Endothelial cell of umbilical vein (primary cell): ENCODE measurements at regions of chr6 and their contacts with region 1.

Region 1: DNA sequence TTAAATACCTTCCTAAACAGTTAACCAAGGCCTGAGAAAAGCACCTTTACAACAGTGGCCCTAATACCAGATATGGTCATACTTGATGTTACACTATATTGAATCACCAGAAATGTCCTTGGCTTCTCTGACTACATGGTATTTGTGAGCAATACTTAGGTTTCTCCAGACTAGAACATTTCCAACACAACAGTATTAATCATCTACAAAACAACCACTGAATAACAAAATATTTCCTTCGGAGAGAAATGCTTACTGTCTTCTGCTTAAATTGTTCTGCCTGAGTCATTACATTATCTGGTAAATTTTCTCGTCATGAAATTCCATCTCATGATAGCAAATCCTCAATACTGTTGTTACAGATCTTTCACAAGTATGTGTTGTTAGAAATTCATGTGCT is 252.9 kb upstream of the RUNX2 start:
- DNase-seq: peak; percentile 73
- H3K4me3 ChIP-seq: no peak overlapping the region
- H3K27ac ChIP-seq: peak overlapping the region; percentile 60
- H3K4me1 ChIP-seq: peaks cover 23% of the 10 kb centered on the region
- H3K27me3 ChIP-seq: no peaks in the 10 kb centered on the region
- CTCF ChIP-seq: no peak
- POLR2A ChIP-seq: no peak

Region 2: GRCh38 chr6:45086360-45087084 is 11.3 kb after region 1 on chr6:
- CTCF ChIA-PET with region 1: interaction called, 13 read pairs
- POLR2A ChIA-PET with region 1: no interaction called
- dilution Hi-C with region 1: no loop called
- intact Hi-C with region 1: no loop called
- DNase-seq: peak; percentile 7
- H3K4me3 ChIP-seq: no peak overlapping the region
- H3K27ac ChIP-seq: no peak overlapping the region
- H3K4me1 ChIP-seq: no peaks in the 10 kb centered on the region
- H3K27me3 ChIP-seq: no peaks in the 10 kb centered on the region
- CTCF ChIP-seq: no peak
- POLR2A ChIP-seq: no peak